Activated CD4-positive, alpha-beta memory T cell treated with anti-CD3 and anti-CD28 coated beads for 36 hours (primary cell): ENCODE measurements at regions of chr6 and their contacts with region 1.

Region 1: GRCh38 chr6:25490018-25490801 is 161.8 kb upstream of the SCGN start:
- DNase-seq: peak; percentile 72
- H3K4me3 Mint-ChIP-seq: no peak overlapping the region
- H3K27ac Mint-ChIP-seq: no peak overlapping the region
- H3K4me1 Mint-ChIP-seq: no peaks in the 10 kb centered on the region
- H3K27me3 Mint-ChIP-seq: no peaks in the 10 kb centered on the region

Region 2: DNA sequence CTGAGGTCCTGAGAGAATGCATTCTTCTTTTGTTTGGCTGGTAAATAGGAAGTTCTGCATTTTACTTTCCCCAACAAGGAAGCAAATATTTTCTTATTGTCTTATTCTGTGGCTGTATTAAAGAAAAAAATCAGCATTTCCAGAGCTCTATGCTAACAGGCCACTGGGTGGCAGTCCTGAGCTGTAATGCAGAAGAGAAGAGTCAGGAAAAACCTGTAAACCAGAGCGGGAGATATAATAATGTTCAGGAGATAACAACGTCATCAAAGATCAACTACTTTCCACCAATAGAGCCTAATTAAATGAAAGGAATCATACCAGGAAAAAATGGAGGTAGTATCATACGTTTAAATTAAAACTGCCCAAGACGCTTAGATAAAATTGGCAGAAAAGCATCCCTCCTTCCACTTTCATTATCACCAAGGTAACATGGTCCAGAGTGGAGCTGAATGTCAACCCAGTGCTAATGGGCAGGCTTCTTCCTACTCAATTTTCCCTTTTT is 266.7 kb before region 1 on chr6:
- CTCF ChIA-PET with region 1: interaction called, 65 read pairs
- POLR2A ChIA-PET with region 1: no interaction called
- intact Hi-C with region 1: loop called (anchors 1 kb)
- DNase-seq: peak; percentile 72
- H3K4me3 Mint-ChIP-seq: peak overlapping the region; percentile 58
- H3K27ac Mint-ChIP-seq: no peak overlapping the region
- H3K4me1 Mint-ChIP-seq: peaks cover 12% of the 10 kb centered on the region
- H3K27me3 Mint-ChIP-seq: peaks cover 2% of the 10 kb centered on the region

Region 3: GRCh38 chr6:25278914-25279747 is 211.1 kb before region 1 on chr6 and contains the start of gene CARMIL1:
- CTCF ChIA-PET with region 1: interaction called, 79 read pairs
- POLR2A ChIA-PET with region 1: no interaction called
- intact Hi-C with region 1: loop called (anchors 1 kb)
- DNase-seq: peak; percentile 77
- H3K4me3 Mint-ChIP-seq: peak within 1 kb of the TSS; percentile 81
- H3K27ac Mint-ChIP-seq: peak within 1 kb of the TSS; percentile 44
- H3K4me1 Mint-ChIP-seq: peaks cover 28% of the 10 kb centered on the region
- H3K27me3 Mint-ChIP-seq: no peaks in the 10 kb centered on the region
- total RNA-seq, gene CARMIL1: 2.4 to 2.7 TPM

Region 4: GRCh38 chr6:25504661-25505060 is 14.5 kb after region 1 on chr6:
- CTCF ChIA-PET with region 1: interaction called, 30 read pairs
- POLR2A ChIA-PET with region 1: no interaction called
- intact Hi-C with region 1: no loop called
- DNase-seq: no peak
- H3K4me3 Mint-ChIP-seq: no peak overlapping the region
- H3K27ac Mint-ChIP-seq: no peak overlapping the region
- H3K4me1 Mint-ChIP-seq: no peaks in the 10 kb centered on the region
- H3K27me3 Mint-ChIP-seq: no peaks in the 10 kb centered on the region

Region 5: GRCh38 chr6:25556516-25556915 is 66.3 kb after region 1 on chr6:
- CTCF ChIA-PET with region 1: interaction called, 18 read pairs
- POLR2A ChIA-PET with region 1: no interaction called
- intact Hi-C with region 1: loop called (anchors 5 kb)
- DNase-seq: peak; percentile 84
- H3K4me3 Mint-ChIP-seq: no peak overlapping the region
- H3K27ac Mint-ChIP-seq: no peak overlapping the region
- H3K4me1 Mint-ChIP-seq: peaks cover 2% of the 10 kb centered on the region
- H3K27me3 Mint-ChIP-seq: no peaks in the 10 kb centered on the region